SK-N-SH (cell line): ENCODE measurements at regions of chr17 and their contacts with region 1.

Region 1: DNA sequence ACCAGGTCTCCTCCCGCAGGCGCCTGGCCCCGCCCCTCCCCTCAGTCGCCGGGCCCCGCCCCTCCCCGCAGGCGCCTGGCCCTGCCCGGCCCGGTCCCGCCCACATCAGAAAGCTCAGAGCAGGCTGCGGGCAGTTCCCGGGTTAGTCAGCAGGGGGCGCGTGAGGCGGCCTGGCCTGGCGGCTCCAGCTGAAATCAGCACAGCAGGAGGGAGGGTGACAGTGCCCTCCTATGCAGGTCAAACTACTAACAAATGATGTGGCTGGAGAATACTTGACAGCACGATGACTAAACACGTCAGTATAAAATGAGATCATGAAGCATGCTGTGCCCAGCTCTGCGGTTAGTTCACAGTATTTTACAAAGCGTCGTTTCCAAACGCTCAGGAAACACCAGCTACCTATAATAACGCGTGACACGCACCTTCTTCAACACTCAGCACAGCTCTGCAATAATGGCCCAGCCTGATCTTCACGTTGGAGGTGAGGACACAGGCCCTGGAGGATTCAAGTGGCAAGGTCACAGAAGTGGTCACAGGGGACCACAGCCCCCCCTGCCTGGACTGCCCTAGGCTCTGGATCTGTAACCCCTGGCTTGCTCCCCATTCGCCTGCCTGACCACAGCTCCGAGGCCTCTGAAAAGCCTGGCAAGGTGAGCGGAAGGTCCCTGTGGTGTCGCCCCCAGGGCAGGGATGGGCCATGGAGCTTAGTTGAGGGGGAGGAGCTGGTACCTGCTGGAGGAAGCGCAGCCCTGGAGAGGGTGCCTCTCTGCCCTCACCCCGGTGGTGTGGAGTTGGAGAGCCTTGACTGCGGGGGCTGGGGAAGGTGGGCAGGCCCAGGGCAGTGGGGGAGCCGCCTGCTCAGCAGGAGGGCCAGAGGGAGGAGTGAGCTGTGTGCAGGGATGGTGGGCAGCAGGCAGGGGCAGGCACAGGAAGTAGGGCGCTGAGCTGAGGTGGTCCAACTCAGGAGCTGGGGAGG is 81.2 kb downstream of the KCNJ12 start:
- DNase-seq: peak; percentile 96
- H3K4me3 ChIP-seq: no peak overlapping the region; a peak in 1 of 4 replicates
- H3K27ac ChIP-seq: no peak overlapping the region
- H3K4me1 ChIP-seq: peaks cover 0 to 13% of the 10 kb centered on the region in 2 experiments; a peak in 1 of 4 replicates
- H3K27me3 ChIP-seq: no peaks in the 10 kb centered on the region
- CTCF ChIP-seq: peak; percentile 88
- EP300 ChIP-seq: no peak
- RAD21 ChIP-seq: peak; percentile 76

Region 2: DNA sequence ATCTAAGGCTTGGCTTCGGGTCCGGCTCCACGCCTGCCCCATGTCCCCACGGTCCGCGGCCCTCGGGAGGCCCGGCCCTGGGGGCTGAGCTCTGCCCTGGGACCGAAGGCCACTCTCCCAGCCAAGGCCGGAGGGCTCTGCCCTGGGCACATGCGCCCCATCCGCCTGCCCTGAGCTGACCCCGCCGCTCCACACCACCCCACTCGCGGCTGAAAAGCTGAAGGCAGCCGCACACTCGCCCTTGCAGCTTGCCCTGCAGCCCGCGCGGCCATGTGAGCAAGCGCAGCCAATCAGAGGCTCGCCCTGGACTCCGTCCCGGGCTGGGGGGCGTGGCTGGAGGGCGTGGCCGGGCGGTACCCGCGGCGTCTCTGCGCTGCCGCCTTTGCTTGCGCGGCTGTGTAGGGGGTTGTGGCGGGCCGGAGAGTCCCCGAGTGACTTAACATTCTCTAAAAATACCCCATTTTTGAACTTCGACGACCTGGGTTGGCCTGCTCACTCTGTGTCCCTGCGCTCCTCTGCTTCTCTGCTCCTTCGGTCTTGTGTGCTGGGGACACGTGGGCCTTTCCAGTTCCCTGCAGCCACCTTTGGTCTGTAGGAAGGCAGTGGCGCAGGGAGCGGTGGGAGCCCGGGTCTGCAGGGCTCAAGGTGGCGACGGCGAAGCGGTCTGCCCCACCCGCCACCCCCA is 181.6 kb before region 1 on chr17:
- CTCF ChIA-PET with region 1: interaction called, 13 read pairs
- POLR2A ChIA-PET with region 1: no interaction called
- DNase-seq: peak; percentile 97
- H3K4me3 ChIP-seq: peak overlapping the region; percentile 54 to 63
- H3K27ac ChIP-seq: peak overlapping the region in 1 of 2 experiments; percentile 36; a peak in 1 of 4 replicates
- H3K4me1 ChIP-seq: peaks cover 6 to 14% of the 10 kb centered on the region in 2 experiments; a peak in 2 of 4 replicates
- H3K27me3 ChIP-seq: no peaks in the 10 kb centered on the region
- CTCF ChIP-seq: no peak
- EP300 ChIP-seq: no peak
- RAD21 ChIP-seq: no peak

Region 3: GRCh38 chr17:21284319-21285163 is 172.8 kb before region 1 on chr17 and contains the start of gene MAP2K3:
- CTCF ChIA-PET with region 1: interaction called, 11 read pairs
- POLR2A ChIA-PET with region 1: no interaction called
- DNase-seq: peak; percentile 99
- H3K4me3 ChIP-seq: peak within 1 kb of the TSS; percentile 90 to 91
- H3K27ac ChIP-seq: peak within 1 kb of the TSS; percentile 67 to 98
- H3K4me1 ChIP-seq: peaks cover 35 to 56% of the 10 kb centered on the region in 2 experiments
- H3K27me3 ChIP-seq: no peaks in the 10 kb centered on the region
- CTCF ChIP-seq: no peak
- EP300 ChIP-seq: no peak
- RAD21 ChIP-seq: no peak
- polyA plus RNA-seq, gene MAP2K3: 21.2 and 30.0 TPM in 2 replicates

Region 4: GRCh38 chr17:21475571-21475970 is 18.2 kb after region 1 on chr17:
- CTCF ChIA-PET with region 1: interaction called, 16 read pairs
- POLR2A ChIA-PET with region 1: no interaction called
- DNase-seq: no peak
- H3K4me3 ChIP-seq: no peak overlapping the region
- H3K27ac ChIP-seq: no peak overlapping the region
- H3K4me1 ChIP-seq: peaks cover 0 to 14% of the 10 kb centered on the region in 2 experiments; a peak in 1 of 4 replicates
- H3K27me3 ChIP-seq: peaks cover 16% of the 10 kb centered on the region
- CTCF ChIP-seq: no peak
- EP300 ChIP-seq: no peak
- RAD21 ChIP-seq: no peak

Region 5: DNA sequence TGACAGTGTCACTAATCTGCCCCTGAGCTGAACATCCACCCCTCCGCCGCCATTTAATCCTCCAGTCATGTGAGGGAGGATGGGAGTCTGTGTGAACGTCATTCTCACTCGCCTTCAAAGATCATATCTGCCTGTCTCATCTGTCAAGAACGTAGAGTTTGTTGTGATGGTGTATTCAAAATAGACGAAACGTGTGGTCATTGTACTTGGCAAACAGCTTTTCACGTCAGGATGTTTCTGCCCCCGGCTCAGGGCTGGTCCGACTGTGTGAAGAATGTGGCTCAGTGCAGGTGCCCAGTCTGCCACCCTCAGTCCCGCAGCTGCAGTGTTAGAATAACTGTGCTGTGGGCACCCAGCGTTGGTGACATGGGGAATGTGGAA is 66.9 kb after region 1 on chr17:
- CTCF ChIA-PET with region 1: interaction called, 11 read pairs
- POLR2A ChIA-PET with region 1: no interaction called
- DNase-seq: no peak
- H3K4me3 ChIP-seq: no peak overlapping the region
- H3K27ac ChIP-seq: no peak overlapping the region
- H3K4me1 ChIP-seq: no peaks in the 10 kb centered on the region; a peak in 1 of 4 replicates
- H3K27me3 ChIP-seq: no peaks in the 10 kb centered on the region; the same call in 1 of the 2 replicates
- CTCF ChIP-seq: no peak
- EP300 ChIP-seq: no peak
- RAD21 ChIP-seq: no peak